Pancreas (tissue), 10 donors: ENCODE measurements at regions of chr6 and their contacts with region 1.

Region 1: GRCh38 chr6:76014633-76015520 is 57.6 kb downstream of the IMPG1 start:
- DNase-seq: no peak
- ATAC-seq: no peak
- H3K4me3 ChIP-seq: no peak overlapping the region
- H3K27ac ChIP-seq: no peak overlapping the region
- H3K4me1 ChIP-seq: no peaks in the 10 kb centered on the region
- H3K27me3 ChIP-seq: no peaks in the 10 kb centered on the region
- CTCF ChIP-seq: no peak

Region 2: GRCh38 chr6:75802366-75802765 is 212.5 kb before region 1 on chr6:
- intact Hi-C with region 1: no loop called
- DNase-seq: no peak
- ATAC-seq: no peak
- H3K4me3 ChIP-seq: no peak overlapping the region
- H3K27ac ChIP-seq: no peak overlapping the region
- H3K4me1 ChIP-seq: no peaks in the 10 kb centered on the region
- H3K27me3 ChIP-seq: no peaks in the 10 kb centered on the region
- CTCF ChIP-seq: no peak

Region 3: DNA sequence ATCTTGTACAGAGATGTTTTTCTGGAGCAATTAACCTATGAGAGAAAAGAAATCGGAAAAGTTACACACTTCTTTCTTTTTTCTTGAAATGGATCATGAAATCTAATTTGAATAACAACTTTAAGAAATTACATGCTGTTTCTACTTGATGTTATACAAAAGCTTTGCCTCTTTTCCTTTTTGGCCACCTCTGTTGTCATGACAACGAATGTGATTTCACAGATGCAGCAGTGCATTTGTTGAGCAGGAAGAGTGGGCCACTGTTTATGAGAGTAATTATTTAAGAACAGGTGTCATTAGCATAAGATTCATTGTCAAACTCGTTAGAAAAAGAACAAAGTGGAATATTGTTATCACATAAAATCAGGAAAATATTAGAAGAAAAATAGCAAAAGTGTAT is 205.9 kb after region 1 on chr6:
- intact Hi-C with region 1: no loop called
- DNase-seq: no peak
- ATAC-seq: no peak
- H3K4me3 ChIP-seq: no peak overlapping the region
- H3K27ac ChIP-seq: no peak overlapping the region
- H3K4me1 ChIP-seq: peaks cover 0 to 6% (median 5%) of the 10 kb centered on the region in 3 donors
- H3K27me3 ChIP-seq: no peaks in the 10 kb centered on the region
- CTCF ChIP-seq: no peak

Region 4: GRCh38 chr6:76803038-76803580 is 788.2 kb after region 1 on chr6:
- intact Hi-C with region 1: loop called in 1 of 3 experiments (anchors 10 kb)
- DNase-seq: no peak
- ATAC-seq: peak in 1 of 4 donors; percentile 14
- H3K4me3 ChIP-seq: no peak overlapping the region
- H3K27ac ChIP-seq: no peak overlapping the region
- H3K4me1 ChIP-seq: peaks cover 0 to 8% (median 5%) of the 10 kb centered on the region in 3 donors
- H3K27me3 ChIP-seq: no peaks in the 10 kb centered on the region
- CTCF ChIP-seq: no peak